Activated CD4-positive, alpha-beta T cell treated with anti-CD3 and anti-CD28 coated beads for 36 hours (primary cell): ENCODE measurements at regions of chr2 and their contacts with region 1.

Region 1: DNA sequence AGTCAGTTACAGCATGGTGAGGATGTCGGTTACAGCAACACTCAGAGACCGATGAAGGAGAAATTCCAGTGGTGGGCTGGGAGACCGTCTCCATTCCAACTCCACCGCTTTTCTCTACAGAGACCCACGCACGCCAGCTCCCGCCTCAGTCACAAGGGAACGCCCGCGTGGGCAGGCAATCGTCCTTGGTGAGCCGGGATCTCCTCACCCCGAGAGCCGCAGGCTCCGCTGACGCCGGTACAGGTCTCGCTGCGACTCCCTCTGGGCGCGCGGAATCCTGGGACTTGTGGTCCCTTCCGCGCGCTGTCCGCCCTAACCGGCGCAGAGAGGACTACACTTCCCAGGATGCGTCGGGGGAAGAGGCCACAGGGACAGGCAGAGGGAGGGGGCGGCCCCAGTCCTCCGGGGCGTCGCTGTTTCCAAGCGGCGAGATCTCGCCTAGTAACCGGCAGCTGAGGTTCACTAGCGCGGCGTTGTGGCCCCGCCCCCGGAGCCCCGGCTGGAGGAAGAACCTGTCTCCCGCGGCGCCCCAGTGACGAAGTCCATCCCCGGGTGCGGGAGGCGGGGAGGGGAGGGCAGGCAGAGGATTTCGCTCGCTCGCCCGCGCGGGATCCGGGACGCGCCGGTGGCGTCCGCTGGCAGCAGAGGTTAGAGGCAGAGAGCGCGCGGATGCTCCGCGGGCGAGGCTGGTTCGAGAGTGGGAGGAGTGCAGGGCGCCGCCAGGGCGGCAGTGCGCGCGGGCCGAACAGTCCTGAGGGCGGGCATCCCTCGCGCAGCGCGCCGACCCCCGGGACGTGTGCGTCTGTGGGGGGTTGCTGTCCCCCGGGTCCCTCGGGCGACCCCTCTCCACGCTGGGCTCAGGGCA is at the start of gene EML6:
- DNase-seq: peak; percentile 99
- ATAC-seq: peak; percentile 99
- H3K4me3 Mint-ChIP-seq: peak within 1 kb of the TSS; percentile 80
- H3K27ac Mint-ChIP-seq: peak within 1 kb of the TSS; percentile 65
- H3K4me1 Mint-ChIP-seq: peaks cover 12% of the 10 kb centered on the region
- H3K27me3 Mint-ChIP-seq: peaks cover 44% of the 10 kb centered on the region
- total RNA-seq, gene EML6: 0.16 to 0.30 TPM

Region 2: GRCh38 chr2:54115284-54116137 is 607.9 kb before region 1 on chr2 and contains the start of gene ACYP2:
- CTCF ChIA-PET with region 1: no interaction called
- POLR2A ChIA-PET with region 1: no interaction called
- intact Hi-C with region 1: loop called in 1 of 2 experiments (anchors 1 kb)
- DNase-seq: peak; percentile 95
- ATAC-seq: peak; percentile 90
- H3K4me3 Mint-ChIP-seq: peak within 1 kb of the TSS; percentile 85
- H3K27ac Mint-ChIP-seq: peak within 1 kb of the TSS; percentile 96
- H3K4me1 Mint-ChIP-seq: peaks cover 12% of the 10 kb centered on the region
- H3K27me3 Mint-ChIP-seq: peaks cover 2% of the 10 kb centered on the region
- total RNA-seq, gene ACYP2: 6.0 to 6.9 TPM

Region 3: GRCh38 chr2:54558188-54559005 is 165.0 kb before region 1 on chr2:
- CTCF ChIA-PET with region 1: no interaction called
- POLR2A ChIA-PET with region 1: no interaction called
- intact Hi-C with region 1: loop called (anchors 1 to 5 kb)
- DNase-seq: peak; percentile 86
- ATAC-seq: peak; percentile 54
- H3K4me3 Mint-ChIP-seq: peak overlapping the region; percentile 91
- H3K27ac Mint-ChIP-seq: peak overlapping the region; percentile 94
- H3K4me1 Mint-ChIP-seq: peaks cover 43% of the 10 kb centered on the region
- H3K27me3 Mint-ChIP-seq: no peaks in the 10 kb centered on the region

Region 4: GRCh38 chr2:54763636-54764291 is 40.4 kb after region 1 on chr2:
- CTCF ChIA-PET with region 1: interaction called, 3 read pairs
- POLR2A ChIA-PET with region 1: no interaction called
- intact Hi-C with region 1: loop called in 1 of 2 experiments (anchors 1 kb)
- DNase-seq: peak; percentile 64
- ATAC-seq: peak; percentile 34
- H3K4me3 Mint-ChIP-seq: no peak overlapping the region
- H3K27ac Mint-ChIP-seq: no peak overlapping the region
- H3K4me1 Mint-ChIP-seq: peaks cover 13% of the 10 kb centered on the region
- H3K27me3 Mint-ChIP-seq: peaks cover 2% of the 10 kb centered on the region

Region 5: GRCh38 chr2:55232084-55232862 is 508.9 kb after region 1 on chr2 and contains the starts of genes CLHC1 and RPS27A:
- CTCF ChIA-PET with region 1: no interaction called
- POLR2A ChIA-PET with region 1: no interaction called
- intact Hi-C with region 1: loop called (anchors 1 to 10 kb)
- DNase-seq: peak; percentile 95
- ATAC-seq: peak; percentile 90
- H3K4me3 Mint-ChIP-seq: peak within 1 kb of the TSS; percentile 98
- H3K27ac Mint-ChIP-seq: peak within 1 kb of the TSS; percentile 98
- H3K4me1 Mint-ChIP-seq: peaks cover 60% of the 10 kb centered on the region
- H3K27me3 Mint-ChIP-seq: no peaks in the 10 kb centered on the region
- total RNA-seq, gene CLHC1: 4.0 to 6.1 TPM
- total RNA-seq, gene RPS27A: 674 to 1,461 TPM